Sciatic nerve (tissue), 2 donors: ENCODE measurements at regions of chr1 and their contacts with region 1.

Region 1: DNA sequence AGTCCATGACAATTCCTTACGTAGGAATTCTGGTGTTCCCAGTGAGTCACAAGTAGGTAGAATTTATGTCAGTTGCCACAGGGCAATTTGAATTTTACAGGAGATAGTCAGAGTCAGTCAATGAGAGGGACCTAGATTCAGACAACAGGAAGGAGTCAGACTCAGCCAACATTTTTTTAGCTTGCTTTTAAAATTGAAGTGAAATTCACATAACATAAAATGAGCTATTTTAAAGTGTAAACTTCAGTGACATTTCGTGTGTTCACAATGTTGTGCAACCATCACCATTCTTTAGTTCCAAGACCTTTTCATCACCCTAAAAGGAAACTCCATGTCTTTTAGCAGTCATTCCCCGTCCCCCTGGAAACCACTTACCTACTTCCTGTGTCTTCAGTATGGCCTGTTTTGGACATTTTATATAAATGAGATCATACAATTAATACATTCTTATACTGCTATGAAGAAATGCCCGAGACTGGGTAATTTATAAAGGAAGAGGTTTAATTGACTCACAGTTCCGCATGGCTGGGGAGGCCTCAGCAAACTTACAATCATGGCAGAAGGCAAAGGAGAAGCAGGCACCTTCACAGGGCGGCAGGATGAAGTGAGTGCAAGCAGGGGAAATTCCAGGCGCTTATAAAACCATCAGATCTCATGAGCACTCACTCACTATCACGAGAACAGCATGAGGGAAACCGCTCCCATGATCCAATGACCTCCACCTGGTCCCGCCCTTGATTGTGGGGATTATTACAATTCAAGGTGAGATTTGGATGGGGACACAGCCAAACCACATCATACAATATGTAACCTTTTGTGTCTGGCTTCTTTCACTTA is 14.7 kb downstream of the AJAP1 start:
- DNase-seq: no peak
- ATAC-seq: no peak

Region 2: GRCh38 chr1:3624200-3625136 is 1044.6 kb before region 1 on chr1 and contains the start of gene TPRG1L:
- intact Hi-C with region 1: no loop called
- DNase-seq: peak; percentile 100
- ATAC-seq: peak; percentile 99
- total RNA-seq, gene TPRG1L: 35.4 TPM

Region 3: DNA sequence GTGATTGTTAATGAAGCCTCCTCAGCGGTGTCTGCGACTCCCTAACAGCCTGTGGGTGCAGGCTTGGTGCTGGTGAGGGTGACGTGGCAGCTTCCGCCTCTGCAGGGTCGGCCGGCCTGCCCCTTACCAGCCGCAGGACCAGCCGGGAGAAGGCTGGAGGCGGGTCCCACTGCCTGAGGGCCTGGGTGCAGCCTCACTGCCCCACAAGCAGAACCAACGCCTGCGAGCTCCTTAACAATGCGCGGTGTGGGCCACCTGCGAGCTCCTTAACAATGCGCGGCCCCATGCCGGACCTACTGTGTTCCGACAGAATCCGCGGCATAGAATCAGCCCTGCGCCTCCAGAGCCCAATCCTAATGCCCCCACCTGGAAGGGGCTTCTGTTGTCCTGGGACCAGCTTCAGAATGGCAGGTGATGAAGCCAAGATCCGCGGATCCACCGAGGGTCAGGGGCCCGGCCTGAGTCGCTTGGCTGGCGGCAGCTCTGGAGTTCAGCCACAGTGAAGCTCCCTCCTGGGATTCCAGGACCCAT is 69.1 kb before region 1 on chr1:
- intact Hi-C with region 1: loop called (anchors 2 kb)
- DNase-seq: peak; percentile 51
- ATAC-seq: no peak

Region 4: GRCh38 chr1:4684136-4684535 is 15.1 kb after region 1 on chr1:
- intact Hi-C with region 1: no loop called
- DNase-seq: no peak
- ATAC-seq: no peak

Region 5: GRCh38 chr1:4755301-4755845 is 86.3 kb after region 1 on chr1:
- intact Hi-C with region 1: no loop called
- DNase-seq: no peak
- ATAC-seq: no peak

Region 6: DNA sequence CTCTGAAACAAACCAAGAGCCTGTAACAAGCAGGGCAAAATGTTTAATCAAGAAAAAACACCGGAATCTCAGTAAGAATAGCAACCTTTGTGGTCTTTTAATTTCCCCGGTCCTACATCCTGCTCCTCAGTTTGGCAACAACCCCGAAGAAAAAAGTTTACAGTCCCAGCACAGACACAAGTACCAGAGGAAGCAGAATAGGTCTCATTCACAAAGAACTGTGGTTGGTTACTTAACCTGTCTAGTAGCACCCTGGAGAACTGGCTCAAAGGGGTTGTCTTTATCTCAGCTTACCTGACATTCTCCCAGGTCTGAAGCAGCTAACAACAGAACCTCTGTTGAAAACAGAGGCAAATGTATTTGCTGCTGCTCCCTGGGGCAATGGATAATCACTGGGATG is 384.7 kb after region 1 on chr1:
- intact Hi-C with region 1: no loop called
- DNase-seq: no peak
- ATAC-seq: no peak